ENCODE measurements at regions of chr5 and their contacts with region 1.

Region 1: GRCh38 chr5:95655575-95655974 is 9.0 kb downstream of the RFESD start:
- DNase-seq: no peak
- H3K4me3 ChIP-seq: no peak overlapping the region
- H3K27ac ChIP-seq: no peak overlapping the region
- H3K4me1 ChIP-seq: no peaks in the 10 kb centered on the region
- H3K27me3 ChIP-seq: no peaks in the 10 kb centered on the region
- CTCF ChIP-seq: no peak
- POLR2A ChIP-seq: no peak

Region 2: DNA sequence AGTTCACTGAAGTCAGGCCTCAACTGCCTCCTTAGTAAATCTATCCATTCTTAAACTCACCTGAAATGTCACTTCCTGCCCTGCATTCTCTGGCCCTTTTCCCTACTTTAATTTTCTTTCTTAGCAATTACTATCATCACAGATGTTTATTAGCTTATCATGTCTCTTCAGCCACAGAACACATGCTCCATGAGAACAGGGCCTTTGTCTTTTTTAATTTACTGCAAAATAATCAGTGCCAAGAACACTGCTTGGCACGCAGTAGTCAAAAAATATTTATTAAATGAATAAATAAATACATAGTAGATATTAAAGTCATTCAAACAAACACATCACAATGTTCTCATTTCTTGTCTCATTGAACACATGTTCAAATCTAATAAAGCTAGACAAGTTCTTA is 147.0 kb before region 1 on chr5:
- intact Hi-C with region 1: no loop called
- DNase-seq: no peak
- H3K4me3 ChIP-seq: no peak overlapping the region
- H3K27ac ChIP-seq: no peak overlapping the region
- H3K4me1 ChIP-seq: no peaks in the 10 kb centered on the region
- H3K27me3 ChIP-seq: no peaks in the 10 kb centered on the region
- CTCF ChIP-seq: no peak
- POLR2A ChIP-seq: no peak

Region 3: DNA sequence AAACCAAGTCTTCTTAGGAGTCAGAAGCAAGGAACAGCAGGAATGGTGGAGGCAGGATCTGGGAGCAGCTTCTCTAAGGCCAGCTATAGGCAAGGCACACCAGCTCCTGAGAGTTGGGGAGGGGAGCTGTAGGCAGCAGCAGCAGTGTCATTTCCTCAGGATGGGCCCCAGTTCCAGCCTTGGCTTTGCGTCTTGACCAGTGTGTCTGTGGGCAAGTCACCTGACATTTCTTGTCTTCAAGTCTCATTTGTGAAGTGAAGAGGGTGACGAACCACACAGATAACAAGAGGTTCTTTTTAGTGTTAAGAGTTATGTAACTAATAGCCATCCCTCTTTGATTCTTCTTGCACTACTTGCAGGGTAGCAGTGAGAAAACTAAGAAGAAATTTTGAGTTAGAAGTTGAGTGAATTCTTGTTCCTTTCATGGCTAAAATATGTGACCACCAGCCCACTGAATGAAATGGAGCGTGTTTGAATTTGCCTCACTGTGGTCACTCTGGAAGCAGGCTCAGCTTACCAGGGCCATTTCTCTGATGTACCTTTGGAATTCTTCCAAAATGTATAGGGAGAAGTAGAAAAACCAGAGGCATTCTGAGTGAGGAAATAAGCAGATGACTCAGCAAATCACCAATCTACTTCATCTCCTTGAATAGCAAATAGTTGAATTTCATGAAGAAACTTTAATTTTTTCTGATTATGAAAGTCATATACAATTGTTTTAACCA is 117.9 kb after region 1 on chr5:
- intact Hi-C with region 1: loop called (anchors 10 kb)
- DNase-seq: no peak
- H3K4me3 ChIP-seq: no peak overlapping the region
- H3K27ac ChIP-seq: no peak overlapping the region
- H3K4me1 ChIP-seq: peaks cover 0 to 12% of the 10 kb centered on the region in 2 donors
- H3K27me3 ChIP-seq: no peaks in the 10 kb centered on the region
- CTCF ChIP-seq: no peak
- POLR2A ChIP-seq: no peak